ENCODE measurements at regions of chr6 and their contacts with region 1.

Region 1: DNA sequence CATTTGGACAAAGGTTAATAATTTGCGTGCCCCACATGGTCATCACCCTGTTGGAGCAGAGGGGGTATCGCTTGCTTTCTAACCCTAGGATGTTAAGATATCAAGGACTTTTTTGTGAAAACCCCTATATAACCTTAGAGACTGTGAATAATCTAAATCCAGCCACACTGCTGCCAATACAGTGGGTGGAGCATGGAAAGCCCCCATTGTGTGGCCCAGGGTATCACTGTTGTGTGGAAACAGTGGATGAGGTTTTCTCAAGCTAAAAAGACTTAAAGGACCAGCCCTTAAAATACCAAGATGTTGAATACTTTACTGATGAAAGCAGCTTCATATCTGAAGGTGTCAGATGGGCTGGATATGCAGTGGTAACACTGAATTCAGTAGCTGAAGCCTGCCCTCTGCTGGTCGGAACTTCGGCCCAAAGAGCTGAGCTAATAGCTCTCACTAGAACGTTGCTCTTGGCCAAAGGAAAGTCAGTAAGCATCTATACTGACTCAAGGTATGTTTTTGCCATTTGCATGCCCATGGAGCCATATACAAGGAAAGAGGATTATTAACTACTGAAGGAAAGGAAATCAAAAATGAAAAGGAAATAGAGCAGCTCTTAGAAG is 695.2 kb downstream of the PHF3 start:
- DNase-seq: peak; percentile 61 to 87 (median 73)
- H3K4me3 ChIP-seq: no peak overlapping the region
- H3K27ac ChIP-seq: no peak overlapping the region
- H3K4me1 ChIP-seq: no peaks in the 10 kb centered on the region
- H3K27me3 ChIP-seq: no peaks in the 10 kb centered on the region
- CTCF ChIP-seq: peak; percentile 47 to 58 (median 56)
- POLR2A ChIP-seq: no peak

Region 2: DNA sequence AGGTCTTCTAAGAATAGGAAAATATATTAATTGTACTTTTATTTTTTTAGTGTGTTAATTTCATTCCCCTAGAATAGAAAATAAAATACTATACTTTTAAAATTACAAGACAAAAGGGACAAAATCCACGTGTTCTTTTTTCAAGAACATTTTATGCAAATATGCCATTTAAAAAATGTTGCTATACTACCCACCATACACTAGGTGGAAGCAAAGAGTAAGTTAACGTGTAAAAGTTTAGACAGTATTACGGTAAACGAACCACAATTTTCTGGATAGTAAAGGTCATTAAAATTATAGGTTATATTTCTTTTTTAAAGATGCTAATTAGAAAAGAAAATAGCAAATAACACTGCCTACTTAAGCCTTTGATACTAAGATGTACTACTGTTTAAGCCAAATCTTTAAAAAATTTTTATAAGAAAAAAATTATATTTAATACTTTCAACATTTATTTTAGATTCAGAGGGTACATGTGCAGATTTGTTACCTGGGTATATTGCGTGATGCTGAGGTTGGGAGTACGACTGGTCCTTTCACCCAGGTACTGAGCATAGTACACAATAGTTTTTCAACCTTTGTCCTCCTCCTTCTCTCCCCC is 407.6 kb before region 1 on chr6:
- intact Hi-C with region 1: loop called in 1 of 2 experiments (anchors 5 kb)
- DNase-seq: no peak
- H3K4me3 ChIP-seq: no peak overlapping the region
- H3K27ac ChIP-seq: no peak overlapping the region
- H3K4me1 ChIP-seq: no peaks in the 10 kb centered on the region
- H3K27me3 ChIP-seq: no peaks in the 10 kb centered on the region
- CTCF ChIP-seq: peak; percentile 43 to 62 (median 58)
- POLR2A ChIP-seq: no peak

Measured in adrenal gland (tissue), 19 donors.